Activated T-helper 1 cell treated with anti-CD3 and anti-CD28 coated beads, Interleukin-12 subunit alpha, Interleukin-12 subunit beta, Interleukin-2, Interleukin-4 antibody, amounts not matched to agents 30 ng/mL and 10 ng/mL and 1 ng/mL, durations not matched to agents 14 hours and 24 hours and 36 hours (primary cell): ENCODE measurements at regions of chr6 and their contacts with region 1.

Region 1: GRCh38 chr6:137873273-137873762 is 6.3 kb downstream of the TNFAIP3 start:
- DNase-seq: peak; percentile 69
- H3K4me3 Mint-ChIP-seq: peak overlapping the region; percentile 98
- H3K27ac Mint-ChIP-seq: peak overlapping the region; percentile 99
- H3K4me1 Mint-ChIP-seq: peaks cover 66% of the 10 kb centered on the region
- H3K27me3 Mint-ChIP-seq: no peaks in the 10 kb centered on the region

Region 2: DNA sequence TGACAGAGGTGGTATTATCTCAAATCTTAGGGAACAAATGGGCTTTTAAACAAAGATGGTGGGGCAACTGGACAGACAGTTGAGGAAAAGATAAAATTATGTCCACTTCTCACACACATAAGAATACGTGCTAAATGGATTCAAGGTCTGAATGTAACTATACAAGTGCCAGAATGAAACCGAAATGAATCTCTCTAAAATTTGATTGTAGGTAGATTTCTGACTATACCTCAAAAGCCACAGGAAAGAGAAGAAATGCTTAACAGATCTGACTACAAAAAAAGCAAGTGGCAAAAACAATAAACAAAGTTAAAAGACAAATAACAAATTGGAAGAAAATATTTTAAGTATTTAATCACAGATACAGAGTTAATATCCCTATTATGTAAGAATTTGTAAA is 196.4 kb before region 1 on chr6:
- intact Hi-C with region 1: loop called (anchors 1 kb)
- DNase-seq: no peak
- H3K4me3 Mint-ChIP-seq: peak overlapping the region; percentile 20
- H3K27ac Mint-ChIP-seq: peak overlapping the region; percentile 88
- H3K4me1 Mint-ChIP-seq: peaks cover 63% of the 10 kb centered on the region
- H3K27me3 Mint-ChIP-seq: peaks cover 3% of the 10 kb centered on the region

Region 3: GRCh38 chr6:137823826-137824555 is 49.3 kb before region 1 on chr6:
- intact Hi-C with region 1: loop called (anchors 1 kb)
- DNase-seq: peak; percentile 68
- H3K4me3 Mint-ChIP-seq: peak overlapping the region; percentile 71
- H3K27ac Mint-ChIP-seq: peak overlapping the region; percentile 98
- H3K4me1 Mint-ChIP-seq: peaks cover 88% of the 10 kb centered on the region
- H3K27me3 Mint-ChIP-seq: no peaks in the 10 kb centered on the region

Region 4: DNA sequence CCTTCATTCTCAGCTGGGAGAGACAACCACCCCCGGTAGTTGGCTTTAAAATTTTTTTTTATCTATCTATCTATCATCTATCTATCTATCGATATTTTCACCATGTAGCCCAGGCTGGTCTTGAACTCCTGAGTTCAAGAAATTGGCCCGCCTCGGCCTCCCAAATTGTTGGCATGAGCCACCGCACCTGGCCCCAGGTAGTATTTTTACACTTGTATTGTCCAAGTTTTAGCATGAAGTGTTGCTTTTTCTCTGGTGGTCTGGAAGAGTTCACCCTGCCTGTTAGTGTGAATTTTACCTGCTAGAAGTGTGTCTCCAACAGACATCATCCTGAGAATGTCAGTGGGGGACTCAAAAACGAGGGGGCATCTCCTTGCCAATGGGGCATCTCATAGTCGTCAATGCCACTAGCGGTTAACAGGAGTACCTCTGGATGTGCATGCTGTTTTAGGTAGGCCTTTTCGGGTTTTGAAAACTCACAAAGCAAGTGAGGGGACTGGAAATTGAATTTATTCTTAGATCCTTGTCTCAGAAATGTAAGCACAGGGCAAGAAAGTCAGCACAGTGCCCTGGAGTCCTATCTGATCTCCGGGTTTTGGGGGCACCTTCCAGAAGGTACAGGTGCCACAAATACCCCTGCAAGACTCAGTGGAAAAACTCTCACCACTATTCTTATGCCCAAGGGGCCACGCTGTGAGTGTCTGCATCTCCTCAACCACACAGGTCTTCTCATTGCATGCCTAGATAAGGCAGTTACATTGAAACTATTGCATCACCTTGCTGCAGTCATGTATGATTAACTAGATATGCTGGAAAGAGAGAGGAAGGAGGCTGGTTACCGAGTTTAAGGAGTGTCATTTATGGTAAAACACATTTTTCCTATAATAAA is 30.9 kb after region 1 on chr6:
- intact Hi-C with region 1: loop called (anchors 1 kb)
- DNase-seq: no peak
- H3K4me3 Mint-ChIP-seq: peak overlapping the region; percentile 19
- H3K27ac Mint-ChIP-seq: peak overlapping the region; percentile 97
- H3K4me1 Mint-ChIP-seq: peaks cover 59% of the 10 kb centered on the region
- H3K27me3 Mint-ChIP-seq: no peaks in the 10 kb centered on the region

Region 5: GRCh38 chr6:137944793-137945498 is 71.6 kb after region 1 on chr6:
- intact Hi-C with region 1: loop called (anchors 1 kb)
- DNase-seq: no peak
- H3K4me3 Mint-ChIP-seq: no peak overlapping the region
- H3K27ac Mint-ChIP-seq: peak overlapping the region; percentile 15
- H3K4me1 Mint-ChIP-seq: peaks cover 86% of the 10 kb centered on the region
- H3K27me3 Mint-ChIP-seq: no peaks in the 10 kb centered on the region

Region 6: DNA sequence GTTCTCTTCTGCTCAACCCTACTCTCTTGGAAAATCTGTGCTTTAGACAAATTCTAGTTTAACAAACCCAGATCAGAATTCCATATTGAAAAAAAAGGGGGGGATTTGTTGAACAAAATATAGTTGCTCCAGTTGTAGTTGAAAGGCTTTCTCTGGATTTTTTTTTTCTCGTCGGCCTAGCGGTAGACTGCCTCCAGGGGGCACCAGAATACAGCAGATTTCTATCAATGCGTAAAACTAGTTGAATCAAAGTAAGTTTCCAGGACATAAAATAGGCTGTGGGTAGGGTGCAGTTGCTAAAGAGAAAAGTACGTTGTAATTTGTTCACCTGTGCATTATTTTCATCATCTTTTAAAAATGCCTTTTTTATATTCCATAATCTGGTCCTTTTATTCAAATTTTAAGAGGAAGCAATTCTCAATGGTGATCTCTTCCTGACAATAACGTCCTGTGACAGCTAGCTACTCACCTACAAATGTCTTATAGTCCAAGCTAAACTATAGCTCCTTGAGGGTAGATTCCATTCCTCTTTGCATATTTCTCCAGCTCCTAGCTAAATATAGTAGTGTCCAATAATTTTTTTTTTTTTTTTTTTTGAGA is 128.5 kb after region 1 on chr6:
- intact Hi-C with region 1: loop called (anchors 1 kb)
- DNase-seq: peak; percentile 38
- H3K4me3 Mint-ChIP-seq: no peak overlapping the region
- H3K27ac Mint-ChIP-seq: no peak overlapping the region
- H3K4me1 Mint-ChIP-seq: peaks cover 27% of the 10 kb centered on the region
- H3K27me3 Mint-ChIP-seq: peaks cover 6% of the 10 kb centered on the region